CD8-positive, alpha-beta T cell (primary cell): ENCODE measurements at regions of chr14 and their contacts with region 1.

Region 1: GRCh38 chr14:91418387-91419043 is 895 bp upstream of the CCDC88C start:
- DNase-seq: peak; percentile 73 to 93 (median 84)
- ATAC-seq: peak; percentile 32
- H3K4me3 ChIP-seq: peak overlapping the region; percentile 47 to 48
- H3K4me3 Mint-ChIP-seq: peak overlapping the region; percentile 80
- H3K27ac ChIP-seq: peak overlapping the region; percentile 19 to 60
- H3K27ac Mint-ChIP-seq: peak overlapping the region; percentile 92
- H3K4me1 ChIP-seq: peaks cover 28% of the 10 kb centered on the region
- H3K4me1 Mint-ChIP-seq: peaks cover 40% of the 10 kb centered on the region
- H3K27me3 ChIP-seq: no peaks in the 10 kb centered on the region
- H3K27me3 Mint-ChIP-seq: no peaks in the 10 kb centered on the region
- CTCF ChIP-seq: peak; percentile 93

Region 2: GRCh38 chr14:91228112-91229004 is 190.2 kb before region 1 on chr14:
- CTCF ChIA-PET with region 1: no interaction called
- POLR2A ChIA-PET with region 1: interaction called, 3 read pairs
- intact Hi-C with region 1: loop called in 1 of 2 experiments (anchors 5 kb)
- DNase-seq: peak; percentile 36 to 96 (median 75)
- ATAC-seq: peak; percentile 77
- H3K4me3 ChIP-seq: no peak overlapping the region
- H3K4me3 Mint-ChIP-seq: peak overlapping the region; percentile 65
- H3K27ac ChIP-seq: peak overlapping the region; percentile 6 to 85
- H3K27ac Mint-ChIP-seq: peak overlapping the region; percentile 94
- H3K4me1 ChIP-seq: peaks cover 87% of the 10 kb centered on the region
- H3K4me1 Mint-ChIP-seq: peaks cover 89% of the 10 kb centered on the region
- H3K27me3 ChIP-seq: no peaks in the 10 kb centered on the region
- H3K27me3 Mint-ChIP-seq: no peaks in the 10 kb centered on the region
- CTCF ChIP-seq: no peak

Region 3: DNA sequence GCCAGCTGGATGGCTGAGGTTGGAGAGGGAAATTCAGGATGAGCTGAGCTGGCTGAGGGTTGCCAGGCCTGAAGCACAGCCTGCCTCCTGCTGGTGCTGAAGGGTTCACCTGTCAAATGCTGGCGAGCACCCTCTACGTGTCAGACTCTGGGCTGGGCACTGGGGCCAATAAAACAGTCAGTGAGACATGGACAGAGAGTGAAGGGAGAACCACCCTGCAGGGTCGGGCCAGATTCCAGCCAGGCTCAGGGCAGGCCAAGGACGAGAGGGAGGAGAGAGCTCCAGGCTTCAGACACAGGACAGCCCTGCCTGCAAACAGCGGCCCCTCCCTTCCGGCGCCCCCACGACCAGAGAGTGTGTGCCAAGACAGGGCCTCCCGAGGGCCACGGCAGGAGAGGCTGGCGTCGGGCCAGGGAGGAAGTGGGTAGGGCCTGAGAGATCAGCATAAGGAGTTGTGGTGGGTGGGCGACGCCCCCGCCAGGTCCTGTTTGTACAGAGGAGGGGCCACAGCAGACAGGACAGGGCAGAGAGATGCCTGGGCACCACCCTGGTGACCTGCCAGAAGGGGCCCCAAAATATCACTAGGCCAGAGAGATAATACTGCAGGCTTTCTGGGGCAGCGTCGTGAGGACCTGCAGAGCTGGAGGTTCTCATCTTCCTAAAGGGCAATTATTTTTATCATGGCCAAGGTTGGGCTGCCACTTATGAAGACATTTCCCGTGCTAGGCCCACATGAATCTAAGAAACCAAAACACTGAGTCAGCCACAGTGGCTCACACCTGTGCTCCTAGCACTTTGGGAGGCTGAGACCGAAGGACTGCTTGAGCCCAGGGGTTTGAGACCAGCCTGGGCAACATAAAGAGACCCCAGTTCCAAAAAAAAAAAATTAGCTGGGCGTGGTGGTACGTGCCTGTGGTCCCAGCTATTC is 100.9 kb before region 1 on chr14:
- CTCF ChIA-PET with region 1: interaction called, 136 read pairs
- POLR2A ChIA-PET with region 1: interaction called, 67 read pairs
- intact Hi-C with region 1: no loop called
- DNase-seq: peak; percentile 51 to 98 (median 88)
- ATAC-seq: peak; percentile 34
- H3K4me3 ChIP-seq: peak overlapping the region; percentile 7 to 26
- H3K4me3 Mint-ChIP-seq: peak overlapping the region; percentile 75
- H3K27ac ChIP-seq: peak overlapping the region; percentile 76 to 89
- H3K27ac Mint-ChIP-seq: peak overlapping the region; percentile 96
- H3K4me1 ChIP-seq: peaks cover 77% of the 10 kb centered on the region
- H3K4me1 Mint-ChIP-seq: peaks cover 71% of the 10 kb centered on the region
- H3K27me3 ChIP-seq: no peaks in the 10 kb centered on the region
- H3K27me3 Mint-ChIP-seq: no peaks in the 10 kb centered on the region
- CTCF ChIP-seq: no peak

Region 4: GRCh38 chr14:91350813-91351511 is 67.6 kb before region 1 on chr14:
- CTCF ChIA-PET with region 1: interaction called, 163 read pairs
- POLR2A ChIA-PET with region 1: interaction called, 28 read pairs
- intact Hi-C with region 1: loop called (anchors 1 kb)
- DNase-seq: peak in 6 of 9 experiments; percentile 52 to 91 (median 72)
- ATAC-seq: peak; percentile 60
- H3K4me3 ChIP-seq: peak overlapping the region; percentile 27 to 39
- H3K4me3 Mint-ChIP-seq: peak overlapping the region; percentile 86
- H3K27ac ChIP-seq: peak overlapping the region; percentile 45 to 83
- H3K27ac Mint-ChIP-seq: peak overlapping the region; percentile 94
- H3K4me1 ChIP-seq: peaks cover 89% of the 10 kb centered on the region
- H3K4me1 Mint-ChIP-seq: peaks cover 90% of the 10 kb centered on the region
- H3K27me3 ChIP-seq: no peaks in the 10 kb centered on the region
- H3K27me3 Mint-ChIP-seq: no peaks in the 10 kb centered on the region
- CTCF ChIP-seq: no peak

Region 5: GRCh38 chr14:91388551-91388975 is 30.0 kb before region 1 on chr14:
- CTCF ChIA-PET with region 1: interaction called, 5 read pairs
- POLR2A ChIA-PET with region 1: interaction called, 20 read pairs
- intact Hi-C with region 1: loop called in 1 of 2 experiments (anchors 1 kb)
- DNase-seq: peak in 5 of 9 experiments; percentile 56 to 81 (median 64)
- ATAC-seq: peak; percentile 68
- H3K4me3 ChIP-seq: peak overlapping the region in 1 of 2 experiments; percentile 37
- H3K4me3 Mint-ChIP-seq: peak overlapping the region; percentile 53
- H3K27ac ChIP-seq: peak overlapping the region in 1 of 2 experiments; percentile 76
- H3K27ac Mint-ChIP-seq: peak overlapping the region; percentile 87
- H3K4me1 ChIP-seq: peaks cover 91% of the 10 kb centered on the region
- H3K4me1 Mint-ChIP-seq: peaks cover 87% of the 10 kb centered on the region
- H3K27me3 ChIP-seq: no peaks in the 10 kb centered on the region
- H3K27me3 Mint-ChIP-seq: no peaks in the 10 kb centered on the region
- CTCF ChIP-seq: no peak

Region 6: DNA sequence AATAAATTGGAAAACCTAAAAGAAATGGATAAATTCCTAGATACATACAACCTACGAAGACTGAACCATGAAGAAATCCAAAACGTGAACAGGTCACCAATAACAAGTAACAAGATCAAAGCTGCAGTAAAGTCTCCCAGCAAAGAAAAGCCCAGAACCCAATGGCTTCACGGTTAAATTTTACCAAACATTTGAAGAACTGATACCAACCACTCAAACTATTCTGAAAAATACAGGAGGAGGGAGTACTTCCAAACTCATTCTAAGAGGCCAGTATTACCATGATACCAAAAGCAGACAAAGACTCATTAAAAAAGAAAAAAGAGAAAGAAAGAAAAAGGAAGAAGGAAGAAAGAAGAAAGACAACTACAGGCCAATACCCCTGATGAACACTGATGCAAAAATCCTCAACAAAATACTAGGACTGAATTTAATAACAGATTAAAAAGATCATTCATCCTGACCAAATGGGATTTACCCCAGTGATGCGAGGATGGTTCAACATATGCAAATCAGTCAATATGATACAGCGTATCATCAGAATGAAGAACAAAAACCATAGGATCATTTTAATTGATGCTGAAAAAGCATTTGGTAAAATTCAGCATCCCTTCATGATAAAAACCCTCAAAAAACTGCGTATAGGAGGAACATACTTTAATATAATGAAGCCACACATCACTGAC is 26.0 kb after region 1 on chr14:
- CTCF ChIA-PET with region 1: no interaction called
- POLR2A ChIA-PET with region 1: no interaction called
- intact Hi-C with region 1: loop called in 1 of 2 experiments (anchors 2 kb)
- DNase-seq: no peak
- ATAC-seq: no peak
- H3K4me3 ChIP-seq: no peak overlapping the region
- H3K4me3 Mint-ChIP-seq: no peak overlapping the region
- H3K27ac ChIP-seq: no peak overlapping the region
- H3K27ac Mint-ChIP-seq: no peak overlapping the region
- H3K4me1 ChIP-seq: no peaks in the 10 kb centered on the region
- H3K4me1 Mint-ChIP-seq: no peaks in the 10 kb centered on the region
- H3K27me3 ChIP-seq: peaks cover 0 to 5% of the 10 kb centered on the region in 2 experiments
- H3K27me3 Mint-ChIP-seq: peaks cover 2% of the 10 kb centered on the region
- CTCF ChIP-seq: no peak